ENCODE measurements at regions of chr4 and their contacts with region 1.

Region 1: GRCh38 chr4:77203380-77204197 is 46.6 kb downstream of the CCNG2 start:
- DNase-seq: peak; percentile 35
- ATAC-seq: peak; percentile 88
- H3K4me3 Mint-ChIP-seq: no peak overlapping the region
- H3K27ac Mint-ChIP-seq: no peak overlapping the region
- H3K4me1 Mint-ChIP-seq: peaks cover 4% of the 10 kb centered on the region
- H3K27me3 Mint-ChIP-seq: no peaks in the 10 kb centered on the region
- CTCF ChIP-seq: peak; percentile 86

Region 2: GRCh38 chr4:76511947-76512346 is 691.6 kb before region 1 on chr4:
- CTCF ChIA-PET with region 1: no interaction called
- POLR2A ChIA-PET with region 1: no interaction called
- intact Hi-C with region 1: loop called (anchors 2 kb)
- DNase-seq: no peak
- ATAC-seq: no peak
- H3K4me3 Mint-ChIP-seq: no peak overlapping the region
- H3K27ac Mint-ChIP-seq: no peak overlapping the region
- H3K4me1 Mint-ChIP-seq: no peaks in the 10 kb centered on the region
- H3K27me3 Mint-ChIP-seq: no peaks in the 10 kb centered on the region
- CTCF ChIP-seq: no peak

Region 3: GRCh38 chr4:77052352-77052751 is 151.2 kb before region 1 on chr4:
- CTCF ChIA-PET with region 1: interaction called, 88 read pairs
- POLR2A ChIA-PET with region 1: no interaction called
- intact Hi-C with region 1: loop called (anchors 1 kb)
- DNase-seq: peak; percentile 33
- ATAC-seq: peak; percentile 47
- H3K4me3 Mint-ChIP-seq: no peak overlapping the region
- H3K27ac Mint-ChIP-seq: no peak overlapping the region
- H3K4me1 Mint-ChIP-seq: no peaks in the 10 kb centered on the region
- H3K27me3 Mint-ChIP-seq: no peaks in the 10 kb centered on the region
- CTCF ChIP-seq: no peak

Region 4: GRCh38 chr4:77095101-77095821 is 108.3 kb before region 1 on chr4:
- CTCF ChIA-PET with region 1: interaction called, 263 read pairs
- POLR2A ChIA-PET with region 1: interaction called, 7 read pairs
- intact Hi-C with region 1: loop called (anchors 1 kb)
- DNase-seq: peak; percentile 53
- ATAC-seq: peak; percentile 100
- H3K4me3 Mint-ChIP-seq: no peak overlapping the region
- H3K27ac Mint-ChIP-seq: peak overlapping the region; percentile 8
- H3K4me1 Mint-ChIP-seq: peaks cover 27% of the 10 kb centered on the region
- H3K27me3 Mint-ChIP-seq: no peaks in the 10 kb centered on the region
- CTCF ChIP-seq: peak; percentile 86

Region 5: DNA sequence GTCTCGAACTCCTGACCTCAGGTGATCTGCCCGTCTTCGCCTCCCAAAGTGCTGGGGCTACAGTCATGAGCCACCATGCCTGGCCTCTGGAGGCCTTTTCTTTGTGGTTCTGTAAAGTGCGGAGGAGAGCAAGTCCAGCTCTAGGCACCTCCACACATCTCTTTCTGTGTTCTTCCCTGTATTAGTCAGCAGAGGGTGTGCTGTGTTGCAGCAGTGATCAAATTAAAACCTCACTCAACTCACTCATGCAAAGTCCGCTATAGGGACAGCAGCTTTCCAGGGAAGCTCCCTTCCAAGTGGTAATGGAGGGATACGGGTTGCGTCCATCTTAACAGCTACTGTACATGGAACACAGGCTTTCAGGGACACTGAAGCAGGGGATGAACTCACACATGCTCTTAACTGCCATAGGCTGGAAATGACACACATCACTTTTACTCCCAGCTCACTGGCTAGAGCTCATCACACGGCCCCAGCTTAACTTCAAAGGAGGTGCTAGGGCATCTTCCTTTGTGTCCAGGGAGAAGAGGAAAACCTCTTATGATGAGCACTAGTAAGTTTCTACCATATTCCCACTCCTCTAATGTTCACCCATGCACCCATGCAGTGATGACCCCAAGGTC is 82.6 kb before region 1 on chr4:
- CTCF ChIA-PET with region 1: interaction called, 133 read pairs
- POLR2A ChIA-PET with region 1: interaction called, 8 read pairs
- intact Hi-C with region 1: loop called (anchors 1 kb)
- DNase-seq: no peak
- ATAC-seq: peak; percentile 80
- H3K4me3 Mint-ChIP-seq: peak overlapping the region; percentile 5
- H3K27ac Mint-ChIP-seq: no peak overlapping the region
- H3K4me1 Mint-ChIP-seq: peaks cover 58% of the 10 kb centered on the region
- H3K27me3 Mint-ChIP-seq: no peaks in the 10 kb centered on the region
- CTCF ChIP-seq: no peak

Region 6: DNA sequence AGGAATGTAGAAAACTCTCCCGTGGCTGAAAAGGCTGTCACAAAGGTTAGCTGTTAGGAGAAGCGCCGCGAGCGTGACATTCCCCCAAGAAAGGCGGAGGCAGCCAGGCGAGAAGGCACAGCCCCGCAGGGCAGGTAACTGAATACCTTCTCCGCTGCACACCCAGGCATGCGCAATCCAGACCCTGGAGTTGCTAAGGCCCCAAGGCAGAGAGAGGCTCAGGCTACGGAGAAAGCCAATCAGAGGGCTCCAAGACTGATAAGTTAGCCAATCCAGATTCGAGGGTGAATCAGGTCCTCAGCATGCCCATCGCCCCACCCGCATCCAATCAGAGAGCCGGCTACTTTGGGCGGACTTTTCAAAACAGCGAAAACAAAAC is 47.1 kb before region 1 on chr4:
- CTCF ChIA-PET with region 1: interaction called, 60 read pairs
- POLR2A ChIA-PET with region 1: interaction called, 126 read pairs
- intact Hi-C with region 1: loop called (anchors 1 kb)
- DNase-seq: no peak
- ATAC-seq: peak; percentile 84
- H3K4me3 Mint-ChIP-seq: peak overlapping the region; percentile 99
- H3K27ac Mint-ChIP-seq: peak overlapping the region; percentile 100
- H3K4me1 Mint-ChIP-seq: peaks cover 75% of the 10 kb centered on the region
- H3K27me3 Mint-ChIP-seq: no peaks in the 10 kb centered on the region
- CTCF ChIP-seq: no peak

Region 7: DNA sequence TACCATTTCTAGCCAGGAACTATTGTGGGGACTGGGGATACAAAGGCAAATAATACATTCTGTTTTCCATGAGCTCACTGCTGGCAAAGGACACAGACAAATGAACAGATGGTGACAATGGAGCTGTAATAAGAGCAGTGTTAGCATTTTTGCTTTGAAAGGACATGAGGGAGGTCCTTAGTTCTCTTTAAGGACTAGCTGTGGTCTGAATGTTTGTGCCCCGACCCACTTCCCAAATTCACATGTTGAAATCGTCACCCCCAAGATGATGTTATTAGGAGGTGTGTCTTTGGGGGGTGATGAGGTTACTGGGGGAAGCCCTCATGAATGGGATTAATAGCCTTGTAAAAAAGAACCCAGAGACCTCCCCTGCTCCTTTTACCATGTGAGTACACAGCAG is 16.3 kb before region 1 on chr4:
- CTCF ChIA-PET with region 1: interaction called, 12 read pairs
- POLR2A ChIA-PET with region 1: no interaction called
- intact Hi-C with region 1: no loop called
- DNase-seq: no peak
- ATAC-seq: no peak
- H3K4me3 Mint-ChIP-seq: no peak overlapping the region
- H3K27ac Mint-ChIP-seq: no peak overlapping the region
- H3K4me1 Mint-ChIP-seq: peaks cover 8% of the 10 kb centered on the region
- H3K27me3 Mint-ChIP-seq: no peaks in the 10 kb centered on the region
- CTCF ChIP-seq: no peak

Measured in activated B cell treated with CpG ODN at 0.5 μM for 24 hours (primary cell).